PC-3 (cell line): ENCODE measurements at regions of chr4 and their contacts with region 1.

Region 1: GRCh38 chr4:37528166-37528885 is 157.8 kb downstream of the RELL1 start:
- DNase-seq: peak; percentile 76
- ATAC-seq: peak; percentile 92
- H3K4me3 ChIP-seq: no peak overlapping the region
- H3K27ac ChIP-seq: peak overlapping the region; percentile 48; the same call in 1 of the 2 replicates
- H3K4me1 ChIP-seq: peaks cover 13% of the 10 kb centered on the region
- H3K27me3 ChIP-seq: no peaks in the 10 kb centered on the region
- CTCF ChIP-seq: peak; percentile 52

Region 2: GRCh38 chr4:36198068-36198808 is 1330.1 kb before region 1 on chr4:
- CTCF ChIA-PET with region 1: no interaction called
- POLR2A ChIA-PET with region 1: no interaction called
- intact Hi-C with region 1: no loop called
- DNase-seq: no peak
- ATAC-seq: no peak
- H3K4me3 ChIP-seq: no peak overlapping the region
- H3K27ac ChIP-seq: no peak overlapping the region
- H3K4me1 ChIP-seq: no peaks in the 10 kb centered on the region
- H3K27me3 ChIP-seq: no peaks in the 10 kb centered on the region
- CTCF ChIP-seq: no peak

Region 3: GRCh38 chr4:37434469-37434868 is 93.9 kb before region 1 on chr4:
- CTCF ChIA-PET with region 1: interaction called, 19 read pairs
- POLR2A ChIA-PET with region 1: no interaction called
- intact Hi-C with region 1: loop called (anchors 5 kb)
- DNase-seq: peak; percentile 53
- ATAC-seq: peak; percentile 51; the same call in 1 of the 2 replicates
- H3K4me3 ChIP-seq: no peak overlapping the region
- H3K27ac ChIP-seq: no peak overlapping the region
- H3K4me1 ChIP-seq: peaks cover 14% of the 10 kb centered on the region
- H3K27me3 ChIP-seq: no peaks in the 10 kb centered on the region
- CTCF ChIP-seq: peak; percentile 59

Region 4: GRCh38 chr4:37452952-37453280 is 75.4 kb before region 1 on chr4:
- CTCF ChIA-PET with region 1: interaction called, 33 read pairs
- POLR2A ChIA-PET with region 1: interaction called, 5 read pairs
- intact Hi-C with region 1: loop called (anchors 1 kb)
- DNase-seq: peak; percentile 87
- ATAC-seq: peak; percentile 68
- H3K4me3 ChIP-seq: peak overlapping the region; percentile 70
- H3K27ac ChIP-seq: no peak overlapping the region
- H3K4me1 ChIP-seq: peaks cover 25% of the 10 kb centered on the region; the same call in 1 of the 2 replicates
- H3K27me3 ChIP-seq: 0 out of 2 replicates have a peak, but pooled peaks cover 3% of the 10 kb centered on the region
- CTCF ChIP-seq: peak; percentile 77

Region 5: DNA sequence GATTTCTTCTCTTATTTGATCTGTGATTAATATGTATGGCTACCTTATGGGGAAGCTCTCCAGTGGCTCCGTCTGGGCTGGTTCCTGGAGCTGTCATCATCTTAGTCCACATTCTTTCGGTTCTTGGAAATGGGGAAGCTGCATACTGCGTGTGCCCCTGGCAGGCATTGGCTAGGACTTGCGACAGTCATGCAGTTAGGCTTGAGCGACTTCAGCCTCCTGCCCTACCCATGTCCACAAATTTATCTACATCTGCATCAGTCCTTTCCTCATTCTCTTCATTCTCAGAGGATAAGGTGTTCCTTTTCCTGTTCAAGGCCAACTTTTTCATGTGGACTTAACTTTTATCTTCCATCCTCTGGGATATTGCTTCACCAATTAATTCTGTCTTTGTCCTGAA is 56.4 kb before region 1 on chr4:
- CTCF ChIA-PET with region 1: interaction called, 3 read pairs
- POLR2A ChIA-PET with region 1: no interaction called
- intact Hi-C with region 1: loop called (anchors 5 kb)
- DNase-seq: peak; percentile 71
- ATAC-seq: peak; percentile 86
- H3K4me3 ChIP-seq: no peak overlapping the region
- H3K27ac ChIP-seq: no peak overlapping the region; the same call in 1 of the 2 replicates
- H3K4me1 ChIP-seq: peaks cover 32% of the 10 kb centered on the region; the same call in 1 of the 2 replicates
- H3K27me3 ChIP-seq: no peaks in the 10 kb centered on the region
- CTCF ChIP-seq: no peak

Region 6: DNA sequence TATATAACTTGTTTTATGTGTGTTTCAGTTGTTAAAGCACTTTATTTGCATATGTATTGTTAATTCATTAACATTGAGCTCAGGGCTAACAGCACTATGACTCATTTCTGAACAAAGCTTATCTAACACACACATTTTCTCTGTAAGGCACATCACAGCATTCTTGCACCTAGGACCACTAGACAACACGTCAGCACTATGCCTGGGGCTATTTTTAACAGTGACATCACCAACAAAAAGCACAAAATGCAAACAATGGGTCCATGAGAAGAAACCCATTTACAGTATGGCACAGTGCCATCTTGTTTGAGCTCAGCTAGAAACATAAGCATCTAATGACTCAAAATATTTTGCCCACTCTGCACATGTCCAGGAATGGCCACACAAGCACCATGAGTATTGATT is 33.5 kb after region 1 on chr4:
- CTCF ChIA-PET with region 1: interaction called, 6 read pairs
- POLR2A ChIA-PET with region 1: no interaction called
- intact Hi-C with region 1: loop called (anchors 1 kb)
- DNase-seq: peak; percentile 77
- ATAC-seq: peak; percentile 46
- H3K4me3 ChIP-seq: no peak overlapping the region
- H3K27ac ChIP-seq: peak overlapping the region; percentile 96
- H3K4me1 ChIP-seq: peaks cover 24% of the 10 kb centered on the region
- H3K27me3 ChIP-seq: no peaks in the 10 kb centered on the region
- CTCF ChIP-seq: no peak

Region 7: DNA sequence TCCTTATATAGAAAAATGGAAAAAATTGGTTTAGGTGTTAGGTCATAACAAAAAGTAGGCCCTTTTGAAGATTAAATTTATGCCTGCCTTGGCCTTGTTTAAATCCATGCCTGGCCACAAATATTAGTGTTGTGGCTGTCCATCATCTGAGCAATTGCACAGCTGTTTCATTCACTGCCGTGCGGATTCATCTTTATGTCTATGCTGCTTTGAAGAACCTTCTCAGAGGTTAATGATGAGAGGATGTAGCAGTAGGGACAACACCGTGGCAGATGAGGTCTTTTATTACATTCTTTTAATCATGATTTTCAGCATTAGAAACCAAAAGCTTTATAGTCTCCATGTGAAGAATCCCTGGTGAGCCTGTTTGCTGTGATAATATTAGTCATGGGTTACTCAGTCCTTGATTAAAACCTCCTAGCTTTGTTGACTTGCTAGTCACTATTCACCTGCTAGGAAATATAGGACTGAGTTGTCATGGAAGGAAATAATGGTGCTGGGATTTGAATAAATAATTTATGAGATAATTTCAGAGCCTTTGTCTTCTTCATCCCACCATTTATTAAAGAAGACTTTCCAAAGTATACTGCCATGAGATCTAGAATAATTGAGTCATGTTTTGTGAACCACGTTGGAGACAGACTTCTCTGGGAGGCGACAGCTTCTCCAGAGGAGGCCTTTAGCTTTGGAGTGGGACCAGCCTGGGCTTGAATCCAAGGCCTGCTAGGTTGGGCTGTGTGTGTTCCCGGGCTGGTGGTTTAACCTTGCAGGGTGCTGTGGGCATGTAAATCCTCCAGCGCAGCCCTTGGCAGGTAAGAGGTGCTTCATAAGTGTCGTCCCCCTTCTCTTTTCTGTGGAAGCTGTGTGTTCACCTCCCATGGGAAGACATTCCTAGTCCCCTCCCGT is 485.4 kb after region 1 on chr4:
- CTCF ChIA-PET with region 1: no interaction called
- POLR2A ChIA-PET with region 1: interaction called, 20 read pairs
- intact Hi-C with region 1: no loop called
- DNase-seq: peak; percentile 62
- ATAC-seq: peak; percentile 96
- H3K4me3 ChIP-seq: no peak overlapping the region
- H3K27ac ChIP-seq: no peak overlapping the region
- H3K4me1 ChIP-seq: peaks cover 14% of the 10 kb centered on the region; the same call in 1 of the 2 replicates
- H3K27me3 ChIP-seq: no peaks in the 10 kb centered on the region
- CTCF ChIP-seq: no peak

Region 8: GRCh38 chr4:38078590-38079421 is 550.5 kb after region 1 on chr4:
- CTCF ChIA-PET with region 1: no interaction called
- POLR2A ChIA-PET with region 1: no interaction called
- intact Hi-C with region 1: no loop called
- DNase-seq: peak; percentile 59
- ATAC-seq: peak; percentile 89
- H3K4me3 ChIP-seq: no peak overlapping the region
- H3K27ac ChIP-seq: peak overlapping the region; percentile 76
- H3K4me1 ChIP-seq: peaks cover 27% of the 10 kb centered on the region
- H3K27me3 ChIP-seq: no peaks in the 10 kb centered on the region
- CTCF ChIP-seq: no peak